Sciatic nerve (tissue), 2 donors: ENCODE measurements at regions of chr20 and their contacts with region 1.

Region 1: GRCh38 chr20:6473197-6473596 is 294.3 kb upstream of the BMP2 start:
- DNase-seq: no peak
- ATAC-seq: no peak

Region 2: GRCh38 chr20:6157345-6157744 is 315.9 kb before region 1 on chr20:
- intact Hi-C with region 1: loop called (anchors 5 kb)
- DNase-seq: no peak
- ATAC-seq: no peak

Region 3: DNA sequence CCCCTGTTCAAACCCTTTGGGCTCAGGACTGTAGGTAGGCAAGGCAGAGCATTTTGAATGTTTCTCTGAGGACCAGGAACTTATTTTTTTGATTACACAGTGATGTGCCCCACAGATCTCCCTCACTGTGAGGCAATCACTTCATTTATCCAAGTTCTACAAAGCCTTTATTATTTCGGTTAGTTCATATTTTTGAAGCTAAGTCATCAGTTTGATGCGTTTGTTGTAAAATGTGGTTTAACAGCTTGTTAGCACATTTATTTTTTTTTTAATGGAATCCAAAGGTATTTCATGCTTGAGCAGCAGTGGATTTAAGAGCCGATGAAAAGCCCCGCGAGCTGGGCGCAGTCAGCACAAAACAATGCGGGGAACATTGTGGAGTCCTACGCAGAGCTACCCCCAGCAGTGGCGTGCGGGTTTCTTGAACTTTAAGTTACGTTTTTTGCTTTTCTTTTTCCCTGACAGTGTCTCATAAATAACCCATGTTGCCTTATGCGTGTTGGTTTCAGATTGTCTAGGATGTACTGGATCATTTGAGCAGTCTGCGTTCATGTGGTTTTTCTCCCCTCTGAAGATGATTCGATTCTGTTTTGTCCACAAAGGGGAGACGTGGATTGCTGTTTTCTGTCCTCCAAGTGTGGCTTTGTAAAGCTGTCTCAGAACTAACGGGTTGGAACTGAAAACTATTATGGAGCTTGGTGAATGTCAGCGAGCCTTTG is 60.7 kb after region 1 on chr20:
- intact Hi-C with region 1: no loop called
- DNase-seq: no peak
- ATAC-seq: peak; percentile 94

Region 4: DNA sequence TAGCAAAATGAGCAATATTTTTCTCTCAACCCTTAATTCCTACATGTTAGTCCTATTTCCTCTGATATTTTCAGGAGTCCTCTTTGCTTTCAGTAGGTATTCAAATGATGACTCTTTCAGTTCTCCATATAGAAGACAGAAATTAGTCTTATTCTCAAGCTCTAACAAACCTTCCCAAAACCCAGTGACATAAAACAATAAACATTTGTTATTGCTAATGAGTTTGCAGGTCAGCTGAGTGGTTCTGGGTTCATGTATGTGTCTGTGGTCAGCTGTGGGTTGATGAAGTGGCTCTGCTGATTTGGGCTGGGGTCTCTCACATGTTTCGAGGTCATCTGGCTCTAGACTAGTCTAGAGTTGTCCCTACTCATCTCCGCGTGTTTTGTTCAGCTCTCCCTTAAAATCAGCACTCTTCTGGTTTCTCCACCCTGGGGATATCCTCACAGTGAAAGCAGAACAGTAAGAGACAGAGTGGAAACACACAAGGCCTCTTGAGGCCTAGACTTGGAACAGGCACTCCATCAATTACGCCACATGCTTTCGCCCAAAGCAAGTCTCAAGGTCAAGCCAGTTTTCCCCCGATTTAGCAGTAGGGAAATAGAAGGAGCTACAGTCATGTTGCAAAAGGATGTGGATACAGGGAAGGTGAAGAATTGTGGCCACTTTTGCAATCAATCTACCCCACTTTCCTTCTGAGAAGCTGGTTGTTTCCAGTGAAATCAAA is 1931.9 kb after region 1 on chr20:
- intact Hi-C with region 1: loop called (anchors 5 kb)
- DNase-seq: no peak
- ATAC-seq: peak; percentile 75